ENCODE measurements at regions of chr16 and their contacts with region 1.

Region 1: GRCh38 chr16:83994087-83994486 is 26.0 kb downstream of the NECAB2 start:
- DNase-seq: peak; percentile 31
- ATAC-seq: no peak
- H3K4me3 ChIP-seq: no peak overlapping the region
- H3K27ac ChIP-seq: no peak overlapping the region
- H3K4me1 ChIP-seq: peaks cover 0 to 8% of the 10 kb centered on the region in 2 experiments; a peak in 1 of 4 replicates
- H3K27me3 ChIP-seq: peaks cover 8% of the 10 kb centered on the region; the same call in 1 of the 2 replicates
- CTCF ChIP-seq: no peak
- POLR2A ChIP-seq: no peak
- RAD21 ChIP-seq: no peak

Region 2: GRCh38 chr16:84013787-84014569 is 19.9 kb after region 1 on chr16:
- CTCF ChIA-PET with region 1: interaction called, 8 read pairs
- POLR2A ChIA-PET with region 1: interaction called, 10 read pairs
- RAD21 ChIA-PET with region 1: interaction called in 1 of 2 experiments, 3 read pairs
- intact Hi-C with region 1: no loop called
- DNase-seq: peak; percentile 100
- ATAC-seq: peak; percentile 87
- H3K4me3 ChIP-seq: no peak overlapping the region
- H3K27ac ChIP-seq: peak overlapping the region; percentile 45
- H3K4me1 ChIP-seq: peaks cover 11 to 21% of the 10 kb centered on the region in 2 experiments
- H3K27me3 ChIP-seq: no peaks in the 10 kb centered on the region
- CTCF ChIP-seq: no peak
- POLR2A ChIP-seq: no peak
- RAD21 ChIP-seq: no peak

Region 3: DNA sequence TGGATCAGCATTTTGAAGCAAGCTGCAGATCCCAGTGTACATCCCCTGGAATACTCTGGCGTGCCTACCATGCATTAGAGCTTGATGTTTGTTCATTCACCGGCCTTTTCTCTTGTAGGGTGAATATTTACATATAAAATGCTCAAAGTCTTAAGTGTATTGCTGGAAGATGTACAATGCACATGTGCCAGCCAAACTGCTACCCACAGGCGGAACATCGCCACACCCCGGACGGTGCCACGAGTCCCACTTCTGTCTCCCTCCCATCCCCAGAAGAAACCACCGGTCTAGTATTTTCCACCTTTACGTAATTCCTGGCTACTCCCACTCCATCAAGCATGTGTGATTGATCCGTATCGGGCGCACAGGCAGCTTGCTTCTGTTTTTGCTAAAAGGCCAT is 44.4 kb after region 1 on chr16:
- CTCF ChIA-PET with region 1: no interaction called
- POLR2A ChIA-PET with region 1: no interaction called
- RAD21 ChIA-PET with region 1: no interaction called
- intact Hi-C with region 1: loop called (anchors 1 kb)
- DNase-seq: no peak
- ATAC-seq: no peak
- H3K4me3 ChIP-seq: no peak overlapping the region
- H3K27ac ChIP-seq: no peak overlapping the region
- H3K4me1 ChIP-seq: peaks cover under 1 to 5% of the 10 kb centered on the region in 2 experiments; a peak in 1 of 4 replicates
- H3K27me3 ChIP-seq: no peaks in the 10 kb centered on the region; the same call in 1 of the 2 replicates
- CTCF ChIP-seq: no peak
- POLR2A ChIP-seq: no peak
- RAD21 ChIP-seq: no peak

Region 4: DNA sequence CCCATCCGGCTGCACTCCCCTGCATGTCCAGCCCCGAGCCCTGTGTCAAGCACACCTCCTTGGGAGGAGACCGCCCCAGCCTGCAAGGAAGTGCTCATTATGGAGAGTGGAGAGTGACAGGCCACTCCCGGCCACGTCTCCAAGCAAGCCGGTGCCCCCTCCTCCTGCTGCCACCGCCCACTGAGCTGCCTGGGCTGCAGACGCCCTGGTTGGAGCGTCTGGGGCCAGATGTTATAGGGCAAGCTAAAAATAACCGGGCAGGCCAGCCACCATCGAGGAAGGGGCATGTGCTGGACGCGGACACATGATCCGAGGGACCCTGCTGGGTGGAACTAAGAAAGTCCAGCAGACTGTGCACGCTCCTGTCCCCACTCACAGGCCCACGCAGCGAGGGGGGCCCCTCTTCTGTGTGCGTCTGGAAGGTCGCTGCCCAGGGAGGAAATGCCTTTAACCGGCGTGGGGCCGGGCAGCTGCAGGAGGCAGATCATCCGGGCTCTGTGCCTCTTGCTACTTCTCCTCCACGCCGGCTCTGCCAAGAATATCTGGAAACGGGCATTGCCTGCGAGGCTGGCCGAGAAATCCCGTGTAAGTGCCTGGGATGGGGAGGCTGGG is 300.6 kb after region 1 on chr16 and contains the start of gene WFDC1:
- CTCF ChIA-PET with region 1: no interaction called
- POLR2A ChIA-PET with region 1: no interaction called
- RAD21 ChIA-PET with region 1: no interaction called
- intact Hi-C with region 1: no loop called
- DNase-seq: no peak
- ATAC-seq: no peak
- H3K4me3 ChIP-seq: no peak within 1 kb of the TSS
- H3K27ac ChIP-seq: no peak within 1 kb of the TSS
- H3K4me1 ChIP-seq: no peaks in the 10 kb centered on the region
- H3K27me3 ChIP-seq: peaks cover 34% of the 10 kb centered on the region; the same call in 1 of the 2 replicates
- CTCF ChIP-seq: no peak
- POLR2A ChIP-seq: no peak
- RAD21 ChIP-seq: no peak
- total RNA-seq, gene WFDC1: 0.42 TPM

Measured in HCT116 (cell line).